Naive thymus-derived CD4-positive, alpha-beta T cell (primary cell): ENCODE measurements at regions of chrX and their contacts with region 1.

Region 1: GRCh38 chrX:78199851-78200250 is 60.4 kb upstream of the TAF9B start:
- DNase-seq: peak in 6 of 9 donors; percentile 7 to 29 (median 9)
- ATAC-seq: peak; percentile 63
- H3K4me3 ChIP-seq: no peak overlapping the region
- H3K4me3 Mint-ChIP-seq: no peak overlapping the region
- H3K27ac ChIP-seq: no peak overlapping the region
- H3K27ac Mint-ChIP-seq: no peak overlapping the region
- H3K4me1 ChIP-seq: no peaks in the 10 kb centered on the region
- H3K4me1 Mint-ChIP-seq: no peaks in the 10 kb centered on the region
- H3K27me3 ChIP-seq: no peaks in the 10 kb centered on the region
- H3K27me3 Mint-ChIP-seq: no peaks in the 10 kb centered on the region

Region 2: GRCh38 chrX:78119521-78120227 is 80.2 kb before region 1 on chrX:
- CTCF ChIA-PET with region 1: no interaction called
- POLR2A ChIA-PET with region 1: no interaction called
- intact Hi-C with region 1: loop called in 1 of 2 experiments (anchors 2 kb)
- DNase-seq: no peak
- ATAC-seq: peak; percentile 45
- H3K4me3 ChIP-seq: no peak overlapping the region
- H3K4me3 Mint-ChIP-seq: peak overlapping the region in 1 of 10 donors; percentile 12
- H3K27ac ChIP-seq: peak overlapping the region; percentile 27
- H3K27ac Mint-ChIP-seq: peak overlapping the region in 6 of 9 donors; percentile 11 to 84 (median 28)
- H3K4me1 ChIP-seq: peaks cover 0 to 25% of the 10 kb centered on the region in 2 donors
- H3K4me1 Mint-ChIP-seq: peaks cover 26 to 70% (median 56%) of the 10 kb centered on the region in 7 donors
- H3K27me3 ChIP-seq: no peaks in the 10 kb centered on the region
- H3K27me3 Mint-ChIP-seq: no peaks in the 10 kb centered on the region

Region 3: GRCh38 chrX:78139160-78140123 is 60.4 kb before region 1 on chrX and contains the start of gene TAF9B:
- CTCF ChIA-PET with region 1: no interaction called
- POLR2A ChIA-PET with region 1: interaction called, 3 read pairs
- intact Hi-C with region 1: loop called in 1 of 2 experiments (anchors 5 kb)
- DNase-seq: peak; percentile 57 to 84 (median 80)
- ATAC-seq: peak; percentile 99
- H3K4me3 ChIP-seq: peak within 1 kb of the TSS; percentile 77
- H3K4me3 Mint-ChIP-seq: peak within 1 kb of the TSS; percentile 88 to 95 (median 92)
- H3K27ac ChIP-seq: peak within 1 kb of the TSS; percentile 82
- H3K27ac Mint-ChIP-seq: peak within 1 kb of the TSS; percentile 81 to 95 (median 93)
- H3K4me1 ChIP-seq: no peaks in the 10 kb centered on the region
- H3K4me1 Mint-ChIP-seq: peaks cover 0 to 11% (median 5%) of the 10 kb centered on the region in 7 donors
- H3K27me3 ChIP-seq: no peaks in the 10 kb centered on the region
- H3K27me3 Mint-ChIP-seq: no peaks in the 10 kb centered on the region
- total RNA-seq, gene TAF9B: 10.4 to 19.9 (median 18.9) TPM